Endothelial cell of umbilical vein (primary cell): ENCODE measurements at regions of chr7 and their contacts with region 1.

Region 1: DNA sequence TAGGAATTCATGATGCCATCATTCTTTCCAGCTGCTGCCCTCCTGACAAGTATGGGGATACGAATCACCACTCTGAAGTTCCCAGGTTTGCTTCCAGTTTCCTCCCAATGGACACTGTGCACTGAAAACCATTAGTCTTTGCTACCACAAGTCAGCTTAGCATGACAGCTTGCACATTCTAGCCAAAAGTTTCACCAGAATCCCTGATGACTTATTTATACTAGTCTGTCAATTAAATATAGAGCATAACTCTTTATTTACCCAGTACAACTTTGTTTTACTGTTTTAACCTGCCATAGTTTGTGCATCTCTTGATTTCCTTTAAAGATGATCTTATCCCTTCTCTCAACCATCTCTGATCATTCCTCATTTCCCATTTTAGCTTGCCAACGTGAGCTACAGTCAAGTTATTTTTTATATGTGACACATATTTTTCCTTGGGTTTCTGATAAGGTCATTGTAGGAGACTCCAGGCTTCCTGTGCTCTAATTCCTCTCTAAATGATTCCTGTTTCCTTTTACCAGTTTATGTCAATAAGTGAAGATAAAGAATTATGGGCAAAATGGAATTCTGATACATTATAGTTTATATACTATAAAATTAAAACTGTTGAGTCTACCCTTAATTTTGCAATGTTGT is 167.5 kb upstream of the MEOX2 start:
- DNase-seq: peak; percentile 71
- H3K4me3 ChIP-seq: no peak overlapping the region
- H3K27ac ChIP-seq: peak overlapping the region; percentile 86
- H3K4me1 ChIP-seq: peaks cover 32% of the 10 kb centered on the region
- H3K27me3 ChIP-seq: no peaks in the 10 kb centered on the region
- CTCF ChIP-seq: no peak
- POLR2A ChIP-seq: no peak

Region 2: GRCh38 chr7:15326044-15326644 is 527.8 kb before region 1 on chr7:
- CTCF ChIA-PET with region 1: no interaction called
- POLR2A ChIA-PET with region 1: no interaction called
- dilution Hi-C with region 1: no loop called
- intact Hi-C with region 1: loop called (anchors 10 kb)
- DNase-seq: peak; percentile 72
- H3K4me3 ChIP-seq: no peak overlapping the region
- H3K27ac ChIP-seq: no peak overlapping the region
- H3K4me1 ChIP-seq: no peaks in the 10 kb centered on the region
- H3K27me3 ChIP-seq: no peaks in the 10 kb centered on the region
- CTCF ChIP-seq: peak; percentile 33 to 45
- POLR2A ChIP-seq: no peak

Region 3: GRCh38 chr7:15628876-15629275 is 225.1 kb before region 1 on chr7:
- CTCF ChIA-PET with region 1: no interaction called
- POLR2A ChIA-PET with region 1: no interaction called
- dilution Hi-C with region 1: no loop called
- intact Hi-C with region 1: no loop called
- DNase-seq: no peak
- H3K4me3 ChIP-seq: no peak overlapping the region
- H3K27ac ChIP-seq: no peak overlapping the region
- H3K4me1 ChIP-seq: peaks cover 5% of the 10 kb centered on the region
- H3K27me3 ChIP-seq: no peaks in the 10 kb centered on the region
- CTCF ChIP-seq: no peak
- POLR2A ChIP-seq: no peak

Region 4: GRCh38 chr7:15839416-15840100 is 14.4 kb before region 1 on chr7:
- CTCF ChIA-PET with region 1: no interaction called
- POLR2A ChIA-PET with region 1: no interaction called
- dilution Hi-C with region 1: no loop called
- intact Hi-C with region 1: loop called (anchors 2 kb)
- DNase-seq: peak; percentile 78
- H3K4me3 ChIP-seq: peak overlapping the region in 2 of 3 experiments; percentile 2 to 37
- H3K27ac ChIP-seq: peak overlapping the region; percentile 42
- H3K4me1 ChIP-seq: peaks cover 14% of the 10 kb centered on the region
- H3K27me3 ChIP-seq: no peaks in the 10 kb centered on the region
- CTCF ChIP-seq: no peak
- POLR2A ChIP-seq: no peak

Region 5: GRCh38 chr7:15921576-15921975 is 67.6 kb after region 1 on chr7:
- CTCF ChIA-PET with region 1: interaction called, 4 read pairs
- POLR2A ChIA-PET with region 1: no interaction called
- dilution Hi-C with region 1: no loop called
- intact Hi-C with region 1: loop called (anchors 5 kb)
- DNase-seq: peak; percentile 59
- H3K4me3 ChIP-seq: peak overlapping the region in 2 of 3 experiments; percentile 28 to 40
- H3K27ac ChIP-seq: peak overlapping the region; percentile 26
- H3K4me1 ChIP-seq: peaks cover 13% of the 10 kb centered on the region
- H3K27me3 ChIP-seq: no peaks in the 10 kb centered on the region
- CTCF ChIP-seq: peak in 1 of 2 donors; percentile 1
- POLR2A ChIP-seq: no peak

Region 6: DNA sequence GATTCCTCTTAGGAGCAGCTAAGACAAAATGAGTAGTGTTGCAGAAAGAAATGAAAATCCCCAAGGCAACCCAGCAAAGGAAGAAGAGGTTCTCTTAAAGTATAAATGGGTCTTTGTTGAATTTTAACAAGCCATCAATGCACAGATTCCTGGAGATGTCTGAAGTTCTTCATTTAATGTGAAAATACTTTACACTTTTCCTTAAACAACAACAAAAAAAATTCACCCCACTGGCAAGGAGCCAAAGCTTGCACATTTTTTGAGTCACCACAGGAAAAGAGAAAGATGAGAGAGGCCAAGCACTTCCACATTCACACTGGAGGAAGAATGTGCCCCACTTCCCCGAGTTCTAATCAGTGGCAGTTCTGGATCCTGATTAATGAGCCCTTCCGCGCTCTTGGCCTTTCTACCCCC is 118.9 kb after region 1 on chr7:
- CTCF ChIA-PET with region 1: no interaction called
- POLR2A ChIA-PET with region 1: no interaction called
- dilution Hi-C with region 1: no loop called
- intact Hi-C with region 1: loop called (anchors 1 kb)
- DNase-seq: peak; percentile 87
- H3K4me3 ChIP-seq: no peak overlapping the region
- H3K27ac ChIP-seq: no peak overlapping the region
- H3K4me1 ChIP-seq: peaks cover 23% of the 10 kb centered on the region
- H3K27me3 ChIP-seq: no peaks in the 10 kb centered on the region
- CTCF ChIP-seq: no peak
- POLR2A ChIP-seq: no peak